ENCODE measurements at regions of chr5 and their contacts with region 1.

Region 1: DNA sequence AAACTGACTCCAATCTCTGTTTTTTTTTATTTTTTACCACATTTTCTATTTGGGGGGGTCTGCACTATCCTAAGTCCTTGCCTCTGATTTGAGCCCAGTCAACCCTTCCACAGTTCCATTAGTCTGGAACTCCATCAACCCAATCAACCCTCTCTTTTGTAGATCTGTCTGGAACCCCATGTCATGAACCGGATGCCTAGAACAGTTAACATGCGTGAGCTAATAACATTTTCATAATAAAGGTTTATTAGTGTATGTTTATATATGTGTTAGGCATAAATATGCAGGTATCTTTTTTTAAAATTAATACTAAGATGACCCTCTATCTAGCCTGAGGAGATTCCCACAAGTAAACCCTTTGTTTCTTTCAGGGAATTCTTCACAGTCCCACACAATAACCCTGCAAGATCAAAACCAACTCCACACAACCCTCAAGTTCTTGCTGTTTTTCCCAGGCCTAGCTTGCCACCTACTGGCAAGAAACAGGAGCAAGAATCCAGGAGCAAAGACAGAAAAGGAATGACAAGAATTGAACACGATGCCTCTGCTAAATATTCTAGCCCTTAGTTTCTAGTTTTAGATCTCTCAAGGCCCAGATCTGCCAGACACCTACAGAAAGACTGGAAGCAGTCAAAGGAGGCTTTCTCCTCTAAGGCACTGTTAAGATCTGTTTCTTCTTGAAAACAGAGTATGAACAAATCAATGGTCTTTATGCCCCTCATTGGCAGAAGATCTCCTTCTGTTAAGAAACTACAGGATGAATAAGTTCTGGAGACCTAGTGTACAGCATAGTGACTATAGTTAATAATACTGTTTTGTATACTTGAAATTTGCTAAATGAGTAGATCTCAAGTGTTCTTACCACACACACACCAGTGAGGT is 100.4 kb downstream of the TRIM36 start:
- DNase-seq: peak; percentile 70
- H3K4me3 Mint-ChIP-seq: no peak overlapping the region
- H3K27ac Mint-ChIP-seq: no peak overlapping the region
- H3K4me1 Mint-ChIP-seq: no peaks in the 10 kb centered on the region
- H3K27me3 Mint-ChIP-seq: peaks cover 36% of the 10 kb centered on the region
- CTCF ChIP-seq: peak; percentile 68

Region 2: DNA sequence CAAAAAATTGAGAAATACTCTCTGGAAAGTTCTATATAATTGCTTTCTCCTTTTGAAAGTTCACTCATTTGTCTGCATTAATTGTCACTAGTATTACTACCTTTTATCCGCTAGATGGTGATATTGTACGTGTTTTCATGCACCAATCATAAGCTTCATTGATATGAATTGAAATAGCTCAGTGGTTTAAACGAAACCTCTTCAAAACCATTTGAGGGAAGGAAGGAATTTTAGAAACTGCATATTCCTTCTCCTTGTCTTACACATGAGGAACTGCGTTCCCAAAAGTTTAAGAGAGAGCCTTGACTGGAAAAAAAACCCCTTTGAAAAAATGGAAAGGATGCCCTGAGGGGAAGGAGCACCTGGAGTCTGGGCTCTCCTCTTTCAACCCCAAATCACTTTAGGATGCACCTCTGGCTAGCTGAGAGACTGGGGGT is 1457.2 kb before region 1 on chr5:
- CTCF ChIA-PET with region 1: interaction called, 26 read pairs
- POLR2A ChIA-PET with region 1: no interaction called
- intact Hi-C with region 1: loop called (anchors 1 kb)
- DNase-seq: peak; percentile 49
- H3K4me3 Mint-ChIP-seq: no peak overlapping the region
- H3K27ac Mint-ChIP-seq: no peak overlapping the region
- H3K4me1 Mint-ChIP-seq: peaks cover 5% of the 10 kb centered on the region
- H3K27me3 Mint-ChIP-seq: peaks cover 21% of the 10 kb centered on the region
- CTCF ChIP-seq: peak; percentile 61

Region 3: GRCh38 chr5:114101153-114101552 is 968.2 kb before region 1 on chr5:
- CTCF ChIA-PET with region 1: interaction called, 3 read pairs
- POLR2A ChIA-PET with region 1: no interaction called
- intact Hi-C with region 1: loop called (anchors 2 kb)
- DNase-seq: peak; percentile 54
- H3K4me3 Mint-ChIP-seq: no peak overlapping the region
- H3K27ac Mint-ChIP-seq: no peak overlapping the region
- H3K4me1 Mint-ChIP-seq: no peaks in the 10 kb centered on the region
- H3K27me3 Mint-ChIP-seq: peaks cover 60% of the 10 kb centered on the region
- CTCF ChIP-seq: peak; percentile 52

Region 4: DNA sequence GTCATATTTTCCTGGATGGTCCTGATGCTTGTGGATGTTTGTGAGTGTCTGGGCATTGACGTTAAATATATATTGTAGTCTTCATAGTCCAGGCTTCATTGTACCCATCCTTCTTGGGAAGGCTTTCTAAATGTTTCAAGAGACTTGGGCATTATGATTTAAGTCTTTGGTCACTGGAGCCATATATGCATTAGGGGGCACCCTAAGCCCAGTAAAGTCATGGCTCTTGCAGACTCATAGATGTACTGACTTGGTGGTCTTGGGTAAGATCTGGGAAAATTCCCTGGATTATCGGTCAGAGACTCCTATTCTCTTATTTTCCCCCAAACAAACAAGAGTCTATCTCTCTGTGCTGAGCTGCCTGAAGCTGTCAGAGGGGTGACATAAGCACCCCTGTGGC is 170.7 kb before region 1 on chr5:
- CTCF ChIA-PET with region 1: no interaction called
- POLR2A ChIA-PET with region 1: no interaction called
- intact Hi-C with region 1: loop called (anchors 10 kb)
- DNase-seq: no peak
- H3K4me3 Mint-ChIP-seq: no peak overlapping the region
- H3K27ac Mint-ChIP-seq: no peak overlapping the region
- H3K4me1 Mint-ChIP-seq: no peaks in the 10 kb centered on the region
- H3K27me3 Mint-ChIP-seq: no peaks in the 10 kb centered on the region
- CTCF ChIP-seq: no peak

Region 5: DNA sequence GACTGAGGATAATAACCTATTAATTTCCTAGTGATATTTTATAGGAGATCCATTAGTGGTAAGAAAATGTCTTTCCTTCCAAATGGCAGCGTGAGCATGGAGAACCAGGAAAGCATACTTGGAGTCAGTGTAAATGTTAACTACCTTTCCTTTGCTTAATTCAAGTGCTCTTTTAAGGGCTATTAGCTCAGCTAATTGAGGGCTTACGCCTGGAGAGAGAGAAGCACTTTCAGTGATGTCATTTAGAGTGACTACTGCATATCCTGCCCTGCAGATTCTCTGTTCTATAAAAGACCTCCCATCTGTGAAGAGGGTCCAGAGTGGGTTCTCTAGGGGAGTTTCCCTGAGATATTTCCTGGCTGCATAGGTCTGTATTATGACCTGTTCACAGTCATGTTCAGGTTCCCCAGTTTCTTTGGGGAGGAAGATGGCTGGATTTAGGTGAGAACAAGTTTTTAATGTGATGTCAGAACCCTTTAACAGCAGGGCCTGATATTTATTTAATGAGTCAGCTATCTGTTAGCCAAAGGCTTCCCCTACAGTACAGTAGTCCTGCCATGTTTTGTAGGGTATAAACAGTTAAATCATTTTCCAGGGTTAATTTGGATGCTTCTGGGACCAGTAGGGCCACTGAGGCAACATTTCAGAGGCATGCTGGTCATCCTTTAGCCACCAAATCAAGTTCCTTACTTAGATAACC is 10.7 kb after region 1 on chr5:
- CTCF ChIA-PET with region 1: interaction called, 26 read pairs
- POLR2A ChIA-PET with region 1: interaction called, 3 read pairs
- intact Hi-C with region 1: no loop called
- DNase-seq: no peak
- H3K4me3 Mint-ChIP-seq: no peak overlapping the region
- H3K27ac Mint-ChIP-seq: no peak overlapping the region
- H3K4me1 Mint-ChIP-seq: no peaks in the 10 kb centered on the region
- H3K27me3 Mint-ChIP-seq: peaks cover 5% of the 10 kb centered on the region
- CTCF ChIP-seq: no peak